Left cardiac atrium (tissue), 4 donors: ENCODE measurements at regions of chr2 and their contacts with region 1.

Region 1: GRCh38 chr2:110116033-110116710 is 550 bp upstream of the MALL start:
- DNase-seq: peak; percentile 77
- ATAC-seq: peak; percentile 81 to 87

Region 2: DNA sequence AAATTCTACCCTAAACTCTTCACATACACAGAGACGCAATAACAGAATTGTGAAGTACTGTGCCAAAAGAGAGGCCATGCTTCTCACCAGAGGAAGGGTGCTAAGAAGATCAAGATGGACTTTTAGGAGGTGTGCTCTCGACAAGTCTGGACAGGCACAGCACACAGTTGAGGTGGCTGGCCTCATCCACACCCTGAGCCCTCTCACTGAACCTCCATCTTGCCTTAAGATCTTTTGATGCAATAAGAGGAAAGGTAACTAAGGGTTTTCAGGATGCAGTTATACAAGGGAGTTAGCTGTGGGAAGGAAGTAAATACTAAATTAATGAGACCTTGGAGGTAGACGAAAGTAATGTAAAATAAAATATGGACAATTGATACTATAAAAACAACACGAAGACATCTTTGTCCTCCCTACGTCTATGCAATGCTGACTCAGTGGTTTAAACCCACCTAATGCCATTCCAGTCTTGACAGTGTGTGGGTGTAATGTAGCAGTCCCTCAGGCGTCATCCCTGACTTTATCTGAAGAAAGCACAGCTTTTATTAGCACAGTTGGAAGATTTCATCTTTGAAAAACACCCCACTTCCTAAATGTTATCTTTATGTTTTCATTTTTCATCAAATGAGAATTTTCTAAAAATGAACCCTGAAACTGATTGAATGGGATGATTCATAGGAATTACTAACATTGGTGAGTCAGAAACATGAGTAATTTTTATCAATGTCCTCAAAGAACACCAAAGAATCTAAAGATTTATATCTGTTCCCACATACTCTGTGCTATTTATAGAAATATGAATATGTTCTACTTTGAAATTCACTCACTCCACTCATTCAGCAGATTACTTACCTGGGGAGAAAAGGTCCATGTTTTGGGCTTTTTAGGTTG is 33.4 kb after region 1 on chr2:
- intact Hi-C with region 1: loop called in 1 of 2 experiments (anchors 5 kb)
- DNase-seq: no peak
- ATAC-seq: peak in 1 of 2 donors; percentile 85

Region 3: GRCh38 chr2:110182449-110182848 is 66.3 kb after region 1 on chr2:
- intact Hi-C with region 1: no loop called
- DNase-seq: no peak
- ATAC-seq: no peak

Region 4: GRCh38 chr2:110677530-110678456 is 561.6 kb after region 1 on chr2 and contains the start of gene BUB1:
- intact Hi-C with region 1: no loop called
- DNase-seq: peak; percentile 98
- ATAC-seq: peak; percentile 99 to 100
- total RNA-seq, gene BUB1: 0.76 to 1.6 TPM